GM12878 (cell line): ENCODE measurements at regions of chr1 and their contacts with region 1.

Region 1: GRCh38 chr1:168159251-168159650 is 19.5 kb upstream of the TIPRL start:
- DNase-seq: no peak
- ATAC-seq: no peak
- H3K4me3 ChIP-seq: no peak overlapping the region
- H3K27ac ChIP-seq: no peak overlapping the region
- H3K4me1 ChIP-seq: peaks cover 3% of the 10 kb centered on the region; the same call in 1 of the 2 replicates
- H3K27me3 ChIP-seq: no peaks in the 10 kb centered on the region
- CTCF ChIP-seq: no peak
- EP300 ChIP-seq: no peak
- POLR2A ChIP-seq: no peak
- RAD21 ChIP-seq: no peak

Region 2: DNA sequence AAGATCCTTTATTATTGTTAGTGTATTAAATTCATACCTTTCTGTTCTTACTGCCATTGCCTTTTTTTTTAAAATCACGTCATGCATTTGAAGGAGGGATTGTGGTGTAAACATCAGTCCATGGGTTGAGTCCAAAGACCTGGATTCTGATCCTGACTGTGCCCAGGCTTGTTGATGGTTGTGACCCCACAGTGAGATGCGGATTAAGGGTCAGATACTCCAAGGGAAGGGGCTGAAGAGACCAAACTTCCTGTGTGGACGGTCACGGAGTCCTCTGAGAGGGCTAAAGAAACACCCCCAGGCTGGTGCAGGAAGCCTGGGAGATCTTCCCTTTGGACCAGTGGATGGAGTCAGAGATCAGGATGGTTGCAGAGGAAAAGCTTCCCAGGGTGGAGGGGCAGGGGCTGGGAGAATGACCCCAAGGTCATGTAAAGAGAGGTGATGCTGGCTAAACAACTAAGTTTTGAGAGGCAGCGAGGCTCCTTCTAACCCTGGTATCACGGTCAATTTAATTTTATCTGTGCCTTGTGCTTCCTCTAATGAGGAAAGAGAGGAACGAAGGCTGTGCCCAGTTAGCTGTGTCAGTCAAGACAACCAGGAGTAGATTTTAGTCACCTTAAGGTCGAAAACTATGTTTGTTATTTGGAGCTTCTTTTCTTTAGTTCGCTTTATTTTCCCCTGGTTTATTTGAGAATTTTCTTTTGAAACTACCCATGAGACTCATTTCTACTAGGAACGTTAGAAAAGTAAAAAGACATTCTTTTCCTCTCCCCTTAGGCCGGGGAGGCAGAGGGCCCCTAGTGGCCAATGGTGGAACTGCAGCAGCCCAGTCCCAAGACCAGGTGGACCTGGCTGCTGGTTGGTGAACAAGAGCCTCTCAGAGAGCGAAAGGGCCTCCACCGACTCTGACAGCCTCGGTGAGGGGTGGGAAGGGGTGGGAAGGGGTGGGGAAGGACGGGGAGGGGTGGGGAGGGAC is 13.8 kb before region 1 on chr1:
- CTCF ChIA-PET with region 1: interaction called, 13 read pairs
- POLR2A ChIA-PET with region 1: interaction called, 6 read pairs
- RAD21 ChIA-PET with region 1: no interaction called
- SMC1A ChIA-PET with region 1: interaction called, 4 read pairs
- in situ Hi-C with region 1: no loop called
- intact Hi-C with region 1: no loop called
- DNase-seq: peak; percentile 52
- ATAC-seq: peak; percentile 99
- H3K4me3 ChIP-seq: no peak overlapping the region
- H3K27ac ChIP-seq: no peak overlapping the region
- H3K4me1 ChIP-seq: no peaks in the 10 kb centered on the region
- H3K27me3 ChIP-seq: no peaks in the 10 kb centered on the region
- CTCF ChIP-seq: peak; percentile 95 to 99 (median 99)
- EP300 ChIP-seq: no peak
- POLR2A ChIP-seq: no peak
- RAD21 ChIP-seq: peak; percentile 59